Psoas muscle (tissue), 8 donors: ENCODE measurements at regions of chr2 and their contacts with region 1.

Region 1: DNA sequence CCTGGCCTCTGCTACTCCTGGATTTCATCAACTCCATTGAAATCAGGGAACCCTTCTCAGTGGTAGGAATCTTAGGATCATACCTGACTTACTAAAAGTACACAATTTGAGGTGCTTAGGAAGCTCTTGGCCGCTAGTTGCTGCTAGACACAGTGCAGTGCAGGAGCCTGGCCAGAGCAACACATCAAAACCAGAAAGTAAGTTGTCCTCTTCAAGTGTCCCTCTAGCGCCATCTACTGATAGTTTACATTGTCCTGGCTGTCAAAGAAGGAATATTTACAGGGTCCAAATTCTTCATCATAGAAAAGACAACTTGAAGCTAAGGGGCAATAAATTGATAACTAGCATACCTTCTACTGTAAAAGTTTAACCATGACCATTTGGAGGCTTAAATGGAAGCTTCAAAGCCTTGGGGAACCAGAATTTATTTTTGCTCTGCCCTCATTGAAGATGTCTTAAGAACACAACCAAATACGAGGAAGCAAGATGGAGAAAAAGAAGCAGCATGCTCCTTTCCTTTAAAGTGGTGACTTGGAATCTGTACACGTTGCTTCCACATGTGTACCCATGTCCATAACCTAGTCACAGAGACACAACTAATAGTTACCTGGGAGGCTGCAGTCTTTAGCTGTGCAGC is 889.1 kb upstream of the GCFC2 start:
- DNase-seq: peak; percentile 14 to 46
- ATAC-seq: peak; percentile 61 to 81 (median 70)
- H3K4me3 ChIP-seq: no peak overlapping the region
- H3K27ac ChIP-seq: no peak overlapping the region
- H3K4me1 ChIP-seq: no peaks in the 10 kb centered on the region
- H3K27me3 ChIP-seq: no peaks in the 10 kb centered on the region
- CTCF ChIP-seq: peak; percentile 61

Region 2: GRCh38 chr2:75787532-75788132 is 812.2 kb before region 1 on chr2:
- intact Hi-C with region 1: loop called (anchors 5 kb)
- DNase-seq: no peak
- ATAC-seq: peak in 1 of 4 donors; percentile 48
- H3K4me3 ChIP-seq: no peak overlapping the region
- H3K27ac ChIP-seq: no peak overlapping the region
- H3K4me1 ChIP-seq: no peaks in the 10 kb centered on the region
- H3K27me3 ChIP-seq: no peaks in the 10 kb centered on the region
- CTCF ChIP-seq: peak; percentile 58

Region 3: GRCh38 chr2:76197842-76198448 is 401.9 kb before region 1 on chr2:
- intact Hi-C with region 1: loop called in 1 of 2 experiments (anchors 5 kb)
- DNase-seq: no peak
- ATAC-seq: no peak
- H3K4me3 ChIP-seq: no peak overlapping the region
- H3K27ac ChIP-seq: no peak overlapping the region
- H3K4me1 ChIP-seq: no peaks in the 10 kb centered on the region
- H3K27me3 ChIP-seq: no peaks in the 10 kb centered on the region
- CTCF ChIP-seq: peak; percentile 68